ENCODE measurements at regions of chr19 and their contacts with region 1.

Region 1: GRCh38 chr19:3185482-3186376 is at the start of gene NCLN:
- DNase-seq: peak; percentile 92
- H3K4me3 Mint-ChIP-seq: peak within 1 kb of the TSS; percentile 89
- H3K27ac Mint-ChIP-seq: peak within 1 kb of the TSS; percentile 90
- H3K4me1 Mint-ChIP-seq: peaks cover 38% of the 10 kb centered on the region
- H3K27me3 Mint-ChIP-seq: no peaks in the 10 kb centered on the region
- total RNA-seq, gene NCLN: 86.3 and 88.1 TPM in 2 replicates

Region 2: DNA sequence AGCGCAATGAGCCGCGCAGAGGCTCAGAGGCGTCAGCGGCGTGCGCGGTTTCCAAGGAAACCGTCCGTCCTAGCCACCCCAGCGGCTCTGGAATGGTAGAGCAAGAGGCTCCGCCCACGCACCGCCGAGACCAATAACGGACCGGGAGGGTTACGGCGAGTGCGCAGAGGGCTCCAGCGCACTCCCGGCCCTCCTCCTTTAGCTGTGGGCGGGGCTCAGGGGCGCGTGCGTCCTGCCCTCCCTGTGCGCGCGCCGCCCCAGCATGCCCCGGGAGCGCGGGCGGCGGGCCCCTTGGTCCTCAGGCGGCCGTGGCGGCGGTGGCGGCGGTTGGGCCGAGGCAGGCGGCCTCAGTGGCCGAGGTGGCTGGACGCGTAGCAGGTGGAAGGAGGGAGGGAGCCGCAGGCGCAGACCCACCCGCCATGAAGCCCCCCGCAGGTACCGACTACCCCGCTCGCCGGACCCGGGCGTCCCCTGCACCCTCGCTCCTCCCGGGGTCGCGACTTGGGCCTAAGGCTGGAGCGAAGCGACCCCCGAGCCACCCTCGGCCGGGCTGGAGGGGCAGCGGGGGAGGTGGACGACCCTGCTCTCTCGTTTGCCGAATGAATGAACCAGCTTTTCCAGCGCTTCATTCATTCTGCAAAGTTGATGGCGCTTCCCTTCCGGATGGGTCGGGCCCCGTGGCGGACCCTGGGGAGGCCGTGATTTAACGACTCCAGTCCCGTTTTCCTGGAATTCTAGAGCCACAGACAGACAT is 400.3 kb before region 1 on chr19 and contains the start of gene THOP1:
- intact Hi-C with region 1: loop called (anchors 1 kb)
- DNase-seq: peak; percentile 98
- H3K4me3 Mint-ChIP-seq: peak within 1 kb of the TSS; percentile 99
- H3K27ac Mint-ChIP-seq: peak within 1 kb of the TSS; percentile 69
- H3K4me1 Mint-ChIP-seq: peaks cover 33% of the 10 kb centered on the region
- H3K27me3 Mint-ChIP-seq: no peaks in the 10 kb centered on the region
- total RNA-seq, gene THOP1: 178 TPM in 2 replicates

Region 3: GRCh38 chr19:3108775-3109174 is 77.0 kb before region 1 on chr19:
- intact Hi-C with region 1: no loop called
- DNase-seq: peak; percentile 56
- H3K4me3 Mint-ChIP-seq: no peak overlapping the region
- H3K27ac Mint-ChIP-seq: no peak overlapping the region
- H3K4me1 Mint-ChIP-seq: peaks cover 6% of the 10 kb centered on the region
- H3K27me3 Mint-ChIP-seq: no peaks in the 10 kb centered on the region